Activated naive CD8-positive, alpha-beta T cell treated with anti-CD3 and anti-CD28 coated beads, Interleukin-2, amount 10 ng/mL, durations not matched to agents 7 days and 5 days (primary cell): ENCODE measurements at regions of chr10 and their contacts with region 1.

Region 1: GRCh38 chr10:72273410-72274212 is at the start of gene DDIT4:
- DNase-seq: peak; percentile 98
- ATAC-seq: peak; percentile 91
- H3K4me3 Mint-ChIP-seq: peak within 1 kb of the TSS; percentile 93
- H3K27ac Mint-ChIP-seq: peak within 1 kb of the TSS; percentile 93
- H3K4me1 Mint-ChIP-seq: peaks cover 47% of the 10 kb centered on the region
- H3K27me3 Mint-ChIP-seq: no peaks in the 10 kb centered on the region
- total RNA-seq, gene DDIT4: 150 to 159 TPM

Region 2: DNA sequence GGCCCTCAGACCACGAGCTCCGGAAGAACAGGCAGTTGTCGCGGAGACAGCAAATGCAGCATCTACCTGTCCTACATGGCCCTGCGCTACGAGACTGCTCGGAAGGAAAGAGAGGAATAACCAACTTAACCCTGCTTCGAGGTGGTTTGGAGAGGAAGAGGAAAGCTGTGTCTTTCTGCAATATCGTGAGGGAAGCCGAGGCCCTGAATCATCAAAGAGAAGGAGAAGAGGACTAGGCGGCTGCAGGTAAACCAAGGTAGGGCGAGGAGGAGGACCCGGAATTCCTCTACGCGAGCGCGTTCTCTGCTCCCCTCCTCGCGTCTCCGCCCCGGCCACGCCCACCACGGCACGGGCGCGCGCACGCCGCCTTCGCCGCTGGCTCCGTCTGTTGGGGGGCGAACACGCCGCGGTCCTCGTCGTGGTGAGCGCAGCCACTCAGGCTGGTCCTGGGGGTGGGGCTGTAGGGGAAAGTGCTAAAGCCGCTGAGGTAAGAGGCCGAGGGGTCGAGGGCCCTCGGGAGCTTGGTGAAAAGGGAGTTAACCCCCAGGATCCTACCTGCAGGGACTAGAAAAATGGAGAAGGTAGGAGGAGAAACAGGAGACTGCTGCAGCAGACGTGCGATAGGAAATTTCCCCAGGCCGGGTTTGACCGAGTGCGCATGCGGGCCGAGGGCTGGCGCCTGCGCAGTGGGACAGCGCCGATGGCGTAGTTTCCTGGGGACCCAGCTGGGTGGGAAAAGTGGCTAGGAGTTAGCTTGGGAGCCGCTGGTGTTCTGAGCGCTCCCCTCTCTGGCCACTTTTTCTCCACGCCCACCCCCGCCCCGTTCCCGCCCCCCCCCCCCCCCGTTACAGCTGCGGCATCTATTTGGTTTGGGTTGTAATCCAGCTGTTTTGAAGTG is 57.7 kb before region 1 on chr10 and contains the starts of genes ANAPC16 and ASCC1:
- POLR2A ChIA-PET with region 1: interaction called, 66 read pairs
- DNase-seq: peak; percentile 99
- ATAC-seq: peak; percentile 87
- H3K4me3 Mint-ChIP-seq: peak within 1 kb of the TSS; percentile 93
- H3K27ac Mint-ChIP-seq: peak within 1 kb of the TSS; percentile 93
- H3K4me1 Mint-ChIP-seq: peaks cover 40% of the 10 kb centered on the region
- H3K27me3 Mint-ChIP-seq: no peaks in the 10 kb centered on the region
- total RNA-seq, gene ANAPC16: 89.2 to 89.8 TPM
- total RNA-seq, gene ASCC1: 28.5 to 34.4 TPM

Region 3: GRCh38 chr10:72260588-72261322 is 12.9 kb before region 1 on chr10:
- POLR2A ChIA-PET with region 1: interaction called, 256 read pairs
- DNase-seq: peak; percentile 95
- ATAC-seq: peak; percentile 80
- H3K4me3 Mint-ChIP-seq: peak overlapping the region; percentile 80
- H3K27ac Mint-ChIP-seq: peak overlapping the region; percentile 91
- H3K4me1 Mint-ChIP-seq: peaks cover 55% of the 10 kb centered on the region
- H3K27me3 Mint-ChIP-seq: no peaks in the 10 kb centered on the region

Region 4: GRCh38 chr10:72297968-72298773 is 24.6 kb after region 1 on chr10:
- POLR2A ChIA-PET with region 1: interaction called, 231 read pairs
- DNase-seq: peak; percentile 89
- ATAC-seq: peak; percentile 76
- H3K4me3 Mint-ChIP-seq: peak overlapping the region; percentile 80
- H3K27ac Mint-ChIP-seq: peak overlapping the region; percentile 95
- H3K4me1 Mint-ChIP-seq: peaks cover 52% of the 10 kb centered on the region
- H3K27me3 Mint-ChIP-seq: no peaks in the 10 kb centered on the region

Region 5: DNA sequence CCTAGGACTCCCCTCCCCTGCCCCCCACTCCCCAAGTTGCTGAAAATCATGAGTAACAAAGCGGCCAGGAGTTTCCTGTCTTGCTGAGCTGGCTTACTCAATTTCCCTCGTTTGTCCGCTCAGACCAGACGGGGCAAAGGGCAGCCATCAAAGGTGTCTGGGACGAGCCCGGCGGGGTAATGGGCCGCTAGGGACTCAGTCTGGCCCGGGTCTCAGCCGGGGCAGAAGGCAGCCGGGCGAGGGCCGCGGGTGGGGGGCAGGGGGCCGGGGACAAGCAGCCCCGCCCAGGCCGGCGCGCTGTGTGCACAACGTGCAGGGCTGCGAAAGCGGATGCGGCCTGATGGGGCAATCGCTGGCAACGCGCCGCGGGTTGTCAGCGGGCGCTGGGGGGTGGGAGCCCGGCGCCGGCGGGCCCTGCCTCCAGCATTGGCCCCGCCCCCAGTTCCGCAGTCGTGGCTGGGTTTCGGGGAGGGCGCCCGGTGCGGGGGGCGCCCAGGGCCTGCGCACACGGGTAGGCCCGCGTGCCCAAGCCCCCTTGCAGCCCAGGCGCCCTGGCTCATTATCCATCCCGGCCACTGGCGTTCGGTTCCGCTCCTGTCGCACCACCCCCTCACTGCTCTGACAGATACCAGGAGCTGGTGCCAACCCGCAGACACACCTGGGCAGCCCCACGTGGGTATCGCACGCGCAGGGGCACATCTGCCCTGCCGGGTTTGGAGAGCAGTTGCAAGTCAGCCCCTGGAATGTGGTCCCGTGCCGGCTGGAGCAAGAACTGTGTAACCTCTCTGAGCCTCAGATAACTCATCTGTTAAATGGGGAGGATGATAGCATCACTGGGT is 46.0 kb after region 1 on chr10:
- POLR2A ChIA-PET with region 1: interaction called, 1,812 read pairs
- DNase-seq: peak; percentile 94
- ATAC-seq: peak; percentile 72
- H3K4me3 Mint-ChIP-seq: peak overlapping the region; percentile 84
- H3K27ac Mint-ChIP-seq: peak overlapping the region; percentile 99
- H3K4me1 Mint-ChIP-seq: peaks cover 69% of the 10 kb centered on the region
- H3K27me3 Mint-ChIP-seq: no peaks in the 10 kb centered on the region

Region 6: GRCh38 chr10:72525277-72525676 is 251.7 kb after region 1 on chr10:
- POLR2A ChIA-PET with region 1: no interaction called
- DNase-seq: no peak
- ATAC-seq: no peak
- H3K4me3 Mint-ChIP-seq: no peak overlapping the region
- H3K27ac Mint-ChIP-seq: no peak overlapping the region
- H3K4me1 Mint-ChIP-seq: no peaks in the 10 kb centered on the region
- H3K27me3 Mint-ChIP-seq: no peaks in the 10 kb centered on the region